ENCODE measurements at regions of chr7 and their contacts with region 1.

Region 1: DNA sequence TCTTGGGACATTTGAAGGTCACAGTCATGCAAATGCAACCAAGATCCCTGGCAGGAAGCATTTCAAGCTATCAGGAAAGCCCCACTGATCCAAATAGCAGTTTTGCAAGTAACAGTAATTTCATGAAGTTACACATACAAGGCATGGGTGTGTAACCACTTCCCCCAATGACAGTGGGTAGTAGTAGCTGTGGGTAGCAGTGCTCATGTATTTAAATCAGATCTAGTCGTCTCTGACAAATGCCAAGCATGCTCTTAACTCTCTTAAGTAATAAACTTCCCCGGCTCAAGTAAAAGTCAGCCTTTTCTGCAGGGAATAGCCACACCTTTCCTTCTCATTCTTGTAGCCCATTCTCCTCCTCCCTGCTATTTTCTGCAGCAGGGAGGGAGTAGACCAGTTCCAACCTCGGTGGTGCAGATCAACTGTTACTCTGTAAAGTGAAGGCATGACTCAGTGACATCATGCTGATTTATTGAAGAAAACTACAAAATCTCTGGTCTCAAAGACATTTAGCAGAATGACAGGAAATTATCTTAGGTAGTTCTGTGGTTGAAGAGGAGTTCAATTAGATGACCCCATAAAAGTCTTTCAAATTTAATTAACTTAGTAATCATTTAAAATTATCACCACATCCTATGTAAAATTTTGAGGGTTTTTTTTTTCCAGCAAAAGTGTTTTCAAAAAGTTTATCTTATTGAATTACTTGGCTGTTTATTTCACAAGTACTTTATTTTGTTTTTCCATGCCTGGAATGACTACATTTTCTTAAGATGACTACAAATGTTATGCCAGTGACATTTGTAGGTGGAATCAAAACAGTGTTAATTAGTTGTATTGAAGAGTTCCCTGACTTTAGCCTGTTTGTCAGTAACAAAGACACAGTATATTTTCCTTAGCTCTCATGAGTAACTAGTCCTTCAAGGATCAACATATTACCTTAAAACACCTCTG is 568.3 kb downstream of the INHBA start:
- DNase-seq: peak; percentile 55
- ATAC-seq: peak; percentile 72
- H3K4me3 ChIP-seq: no peak overlapping the region
- H3K27ac ChIP-seq: no peak overlapping the region
- H3K4me1 ChIP-seq: peaks cover 9% of the 10 kb centered on the region
- H3K27me3 ChIP-seq: no peaks in the 10 kb centered on the region
- CTCF ChIP-seq: no peak
- POLR2A ChIP-seq: no peak
- RAD21 ChIP-seq: no peak

Region 2: DNA sequence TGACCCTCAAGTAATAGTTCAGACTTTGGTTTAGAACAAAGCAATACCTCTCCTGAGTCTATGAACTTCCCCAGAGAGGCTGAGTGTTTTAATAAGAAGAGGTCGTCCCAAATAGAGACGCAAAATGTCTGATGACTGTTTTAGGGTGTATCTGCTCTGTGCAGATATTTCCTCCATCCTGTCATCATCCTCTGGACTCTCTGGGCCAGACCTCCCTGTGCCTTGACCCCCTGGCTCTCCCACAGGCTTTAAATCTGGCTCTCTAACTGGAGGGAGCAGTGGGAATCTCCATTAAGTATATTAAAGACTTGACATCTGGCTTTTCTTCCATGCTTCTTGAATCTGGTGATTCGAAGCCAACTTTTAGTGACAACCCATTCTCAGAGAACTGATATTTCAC is 64.9 kb before region 1 on chr7:
- CTCF ChIA-PET with region 1: no interaction called
- POLR2A ChIA-PET with region 1: no interaction called
- dilution Hi-C with region 1: no loop called
- in situ Hi-C with region 1: no loop called
- intact Hi-C with region 1: loop called (anchors 10 kb)
- DNase-seq: no peak
- ATAC-seq: no peak
- H3K4me3 ChIP-seq: no peak overlapping the region
- H3K27ac ChIP-seq: no peak overlapping the region
- H3K4me1 ChIP-seq: 0 out of 2 replicates have a peak, but pooled peaks cover 2% of the 10 kb centered on the region
- H3K27me3 ChIP-seq: no peaks in the 10 kb centered on the region
- CTCF ChIP-seq: no peak
- POLR2A ChIP-seq: no peak
- RAD21 ChIP-seq: no peak

Measured in IMR-90 (cell line).